ENCODE measurements at regions of chr2 and their contacts with region 1.

Region 1: DNA sequence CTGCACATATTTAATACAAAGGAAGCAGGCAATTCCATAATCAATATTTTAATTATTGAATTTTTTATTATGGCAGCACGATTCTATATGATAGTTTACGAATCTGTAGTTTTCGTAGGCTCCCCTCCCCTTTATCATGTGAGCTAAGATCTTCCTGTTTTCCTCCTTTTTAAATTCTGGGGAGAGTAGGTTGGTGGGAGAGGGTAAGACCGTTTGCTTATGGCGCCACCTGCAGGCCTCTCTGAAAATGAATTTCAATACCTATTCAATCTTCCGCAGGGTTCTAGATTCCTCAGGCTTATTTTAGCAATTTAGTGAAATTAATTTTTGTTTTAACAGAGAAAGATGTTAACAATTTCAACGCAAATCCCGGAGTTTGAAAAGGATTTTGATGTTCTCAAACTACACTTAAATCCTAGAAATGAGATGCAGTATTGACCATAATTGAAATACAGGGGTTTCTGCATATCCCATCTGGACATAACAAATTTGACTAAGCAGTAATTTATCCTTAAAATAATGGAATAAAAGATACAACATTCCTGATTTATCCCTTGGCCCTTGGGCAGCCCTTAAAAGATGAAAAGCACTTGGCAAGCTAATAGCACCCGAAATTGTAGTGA is 12.8 kb upstream of the GBX2 start:
- DNase-seq: peak; percentile 76
- H3K4me3 Mint-ChIP-seq: no peak overlapping the region
- H3K27ac Mint-ChIP-seq: no peak overlapping the region
- H3K4me1 Mint-ChIP-seq: no peaks in the 10 kb centered on the region
- H3K27me3 Mint-ChIP-seq: peaks cover 41% of the 10 kb centered on the region

Region 2: GRCh38 chr2:235493775-235494715 is 686.9 kb before region 1 on chr2 and contains the start of gene AGAP1:
- intact Hi-C with region 1: loop called (anchors 10 kb)
- DNase-seq: peak; percentile 66
- H3K4me3 Mint-ChIP-seq: peak within 1 kb of the TSS; percentile 72
- H3K27ac Mint-ChIP-seq: no peak within 1 kb of the TSS
- H3K4me1 Mint-ChIP-seq: peaks cover 7% of the 10 kb centered on the region
- H3K27me3 Mint-ChIP-seq: peaks cover 60% of the 10 kb centered on the region
- total RNA-seq, gene AGAP1: 2.3 and 3.8 TPM in 2 replicates

Region 3: GRCh38 chr2:235669269-235669831 is 511.6 kb before region 1 on chr2:
- intact Hi-C with region 1: loop called (anchors 5 kb)
- DNase-seq: peak; percentile 57
- H3K4me3 Mint-ChIP-seq: no peak overlapping the region
- H3K27ac Mint-ChIP-seq: no peak overlapping the region
- H3K4me1 Mint-ChIP-seq: peaks cover 2% of the 10 kb centered on the region
- H3K27me3 Mint-ChIP-seq: peaks cover 53% of the 10 kb centered on the region

Region 4: GRCh38 chr2:235766278-235766677 is 414.7 kb before region 1 on chr2:
- intact Hi-C with region 1: loop called (anchors 1 kb)
- DNase-seq: peak; percentile 84
- H3K4me3 Mint-ChIP-seq: no peak overlapping the region
- H3K27ac Mint-ChIP-seq: no peak overlapping the region
- H3K4me1 Mint-ChIP-seq: no peaks in the 10 kb centered on the region
- H3K27me3 Mint-ChIP-seq: peaks cover 2% of the 10 kb centered on the region

Region 5: DNA sequence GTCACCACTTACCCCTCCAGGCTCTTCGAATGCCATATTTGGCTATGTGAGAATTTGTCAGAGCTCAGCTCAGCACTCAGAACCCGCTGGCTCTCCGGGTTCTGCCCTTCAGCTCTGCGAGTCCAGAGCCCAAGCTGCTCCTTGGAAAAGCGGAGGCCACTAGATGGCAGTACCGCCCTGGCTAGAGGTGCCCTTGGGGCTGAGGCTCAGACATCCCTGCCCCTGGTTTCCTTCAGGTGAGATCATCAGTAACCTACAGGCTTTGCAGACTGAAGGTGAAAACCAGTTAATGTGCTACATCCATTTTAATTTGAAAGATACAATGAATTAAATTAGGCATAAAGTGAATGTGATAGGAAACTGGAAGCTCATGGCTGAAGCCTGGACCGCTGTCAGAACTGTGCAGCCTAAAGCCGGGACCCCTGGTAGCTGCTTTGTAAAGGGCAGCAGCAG is 401.5 kb before region 1 on chr2:
- intact Hi-C with region 1: loop called (anchors 1 kb)
- DNase-seq: peak; percentile 88
- H3K4me3 Mint-ChIP-seq: no peak overlapping the region
- H3K27ac Mint-ChIP-seq: no peak overlapping the region
- H3K4me1 Mint-ChIP-seq: no peaks in the 10 kb centered on the region
- H3K27me3 Mint-ChIP-seq: peaks cover 12% of the 10 kb centered on the region

Region 6: GRCh38 chr2:236085647-236086046 is 95.3 kb before region 1 on chr2:
- intact Hi-C with region 1: no loop called
- DNase-seq: no peak
- H3K4me3 Mint-ChIP-seq: no peak overlapping the region
- H3K27ac Mint-ChIP-seq: no peak overlapping the region
- H3K4me1 Mint-ChIP-seq: no peaks in the 10 kb centered on the region
- H3K27me3 Mint-ChIP-seq: no peaks in the 10 kb centered on the region

Region 7: DNA sequence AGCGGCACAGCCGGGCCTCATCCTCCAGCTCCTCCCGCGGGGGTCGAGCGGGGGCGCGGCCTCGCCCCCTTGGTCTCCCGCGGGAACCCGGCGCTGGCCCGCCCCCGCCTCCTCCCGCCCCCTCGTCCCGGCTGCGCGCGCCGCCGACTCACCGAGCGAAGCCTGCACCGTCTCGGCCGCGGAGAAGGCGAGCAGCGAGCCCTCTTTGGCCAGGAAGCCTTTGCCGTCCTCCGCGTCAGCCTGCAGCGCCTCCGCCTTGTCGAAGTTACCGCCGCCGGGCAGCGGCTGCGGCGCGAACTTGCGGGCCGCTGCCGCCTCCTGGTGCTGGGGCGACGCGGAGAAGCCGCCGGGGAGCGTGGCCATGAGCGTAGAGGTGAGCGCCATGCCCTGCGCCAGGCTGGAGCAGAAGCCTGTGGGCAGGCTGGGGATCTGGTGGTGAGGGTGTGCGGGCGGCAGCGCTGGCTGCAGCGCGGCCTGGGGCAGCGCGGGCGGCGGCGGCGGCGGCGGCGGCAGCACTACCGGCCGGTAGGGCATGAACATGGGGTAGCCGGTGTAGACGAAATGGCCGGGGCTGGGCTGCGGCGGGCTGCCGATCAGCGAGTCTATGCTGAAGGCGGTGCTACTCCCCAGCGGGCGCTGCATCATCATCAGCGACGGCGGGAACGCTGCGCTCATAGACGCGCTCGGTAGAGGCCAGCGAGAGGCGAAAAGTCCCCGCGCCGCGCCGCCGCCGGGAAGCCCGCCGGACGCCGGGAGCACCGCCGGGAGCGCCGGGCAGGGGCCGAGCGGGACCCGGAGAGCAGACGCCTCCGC is 13.4 kb before region 1 on chr2:
- intact Hi-C with region 1: loop called (anchors 1 kb)
- DNase-seq: no peak
- H3K4me3 Mint-ChIP-seq: no peak overlapping the region
- H3K27ac Mint-ChIP-seq: no peak overlapping the region
- H3K4me1 Mint-ChIP-seq: no peaks in the 10 kb centered on the region
- H3K27me3 Mint-ChIP-seq: peaks cover 61% of the 10 kb centered on the region

Measured in activated CD4-positive, alpha-beta T cell treated with anti-CD3 and anti-CD28 coated beads, Interleukin-2, amount 10 ng/mL, durations not matched to agents 24 days and 14 days (primary cell).